ENCODE measurements at regions of chr22 and their contacts with region 1.

Region 1: GRCh38 chr22:37442537-37442936 is 15.3 kb upstream of the ELFN2 start:
- DNase-seq: peak; percentile 67
- ATAC-seq: peak; percentile 87
- H3K4me3 ChIP-seq: peak overlapping the region; percentile 46 to 48
- H3K27ac ChIP-seq: peak overlapping the region; percentile 17
- H3K4me1 ChIP-seq: peaks cover 31 to 51% of the 10 kb centered on the region in 2 experiments
- H3K27me3 ChIP-seq: no peaks in the 10 kb centered on the region
- CTCF ChIP-seq: no peak
- POLR2A ChIP-seq: peak; percentile 79
- RAD21 ChIP-seq: no peak

Region 2: GRCh38 chr22:36999463-36999862 is 443.1 kb before region 1 on chr22:
- CTCF ChIA-PET with region 1: no interaction called
- POLR2A ChIA-PET with region 1: no interaction called
- RAD21 ChIA-PET with region 1: no interaction called
- intact Hi-C with region 1: no loop called
- DNase-seq: peak; percentile 37
- ATAC-seq: no peak
- H3K4me3 ChIP-seq: peak overlapping the region in 1 of 2 experiments; percentile 20; a peak in 1 of 4 replicates
- H3K27ac ChIP-seq: peak overlapping the region; percentile 56
- H3K4me1 ChIP-seq: peaks cover 17 to 29% of the 10 kb centered on the region in 2 experiments
- H3K27me3 ChIP-seq: no peaks in the 10 kb centered on the region
- CTCF ChIP-seq: no peak
- POLR2A ChIP-seq: no peak
- RAD21 ChIP-seq: no peak

Region 3: DNA sequence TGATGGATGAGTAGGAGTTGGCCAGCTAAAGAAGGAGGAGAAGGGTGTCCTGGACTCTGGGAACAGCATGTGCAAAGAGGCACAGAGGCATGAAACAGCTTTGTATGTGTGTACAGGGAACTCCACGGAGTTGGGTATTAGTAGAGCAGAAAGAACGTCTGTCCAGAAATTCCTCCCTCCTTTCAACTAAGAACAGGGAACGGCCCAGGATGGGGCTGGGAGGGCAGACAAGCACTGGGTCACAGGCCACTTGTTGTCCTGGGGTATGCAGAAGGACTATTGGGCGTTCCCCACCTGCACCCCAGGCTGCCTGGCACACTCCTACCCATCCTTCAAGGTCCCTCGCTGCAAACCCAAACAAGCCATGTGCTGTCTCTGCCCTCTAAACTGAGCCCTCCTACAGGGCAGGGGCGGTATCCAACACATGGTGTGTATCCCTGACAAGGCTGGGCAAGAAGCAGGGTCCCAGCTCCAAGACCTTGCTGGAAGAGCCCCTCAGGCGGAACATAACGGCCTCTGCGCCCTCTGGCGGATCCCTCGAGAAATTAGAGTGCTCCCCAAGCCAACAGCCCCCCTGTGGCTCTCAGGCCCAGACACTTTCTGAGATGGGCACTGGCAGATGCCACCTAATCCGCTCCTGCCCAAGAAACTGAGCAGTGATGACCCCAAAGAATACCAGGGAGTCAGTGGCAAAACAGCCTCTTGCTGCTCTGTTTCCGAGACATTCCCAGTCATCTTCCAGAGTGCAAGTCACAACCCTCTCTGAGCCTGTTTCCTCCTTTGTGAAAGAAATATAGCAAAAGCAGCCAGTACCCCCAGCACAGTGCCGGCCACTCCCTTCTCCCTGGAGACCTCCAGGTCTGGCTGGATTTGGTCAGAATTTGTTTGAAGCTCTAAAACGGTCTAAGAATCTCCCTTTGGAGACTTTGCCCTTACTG is 13.6 kb before region 1 on chr22:
- CTCF ChIA-PET with region 1: interaction called, 10 read pairs
- POLR2A ChIA-PET with region 1: interaction called, 7 read pairs
- RAD21 ChIA-PET with region 1: interaction called, 3 to 5 read pairs
- intact Hi-C with region 1: no loop called
- DNase-seq: peak; percentile 37
- ATAC-seq: peak; percentile 31
- H3K4me3 ChIP-seq: peak overlapping the region; percentile 70 to 87; a peak in 3 of 4 replicates
- H3K27ac ChIP-seq: peak overlapping the region; percentile 95
- H3K4me1 ChIP-seq: peaks cover 54 to 91% of the 10 kb centered on the region in 2 experiments
- H3K27me3 ChIP-seq: no peaks in the 10 kb centered on the region
- CTCF ChIP-seq: peak in 2 of 3 experiments; percentile 82 to 88; a peak in 4 of 6 replicates
- POLR2A ChIP-seq: no peak
- RAD21 ChIP-seq: no peak

Region 4: DNA sequence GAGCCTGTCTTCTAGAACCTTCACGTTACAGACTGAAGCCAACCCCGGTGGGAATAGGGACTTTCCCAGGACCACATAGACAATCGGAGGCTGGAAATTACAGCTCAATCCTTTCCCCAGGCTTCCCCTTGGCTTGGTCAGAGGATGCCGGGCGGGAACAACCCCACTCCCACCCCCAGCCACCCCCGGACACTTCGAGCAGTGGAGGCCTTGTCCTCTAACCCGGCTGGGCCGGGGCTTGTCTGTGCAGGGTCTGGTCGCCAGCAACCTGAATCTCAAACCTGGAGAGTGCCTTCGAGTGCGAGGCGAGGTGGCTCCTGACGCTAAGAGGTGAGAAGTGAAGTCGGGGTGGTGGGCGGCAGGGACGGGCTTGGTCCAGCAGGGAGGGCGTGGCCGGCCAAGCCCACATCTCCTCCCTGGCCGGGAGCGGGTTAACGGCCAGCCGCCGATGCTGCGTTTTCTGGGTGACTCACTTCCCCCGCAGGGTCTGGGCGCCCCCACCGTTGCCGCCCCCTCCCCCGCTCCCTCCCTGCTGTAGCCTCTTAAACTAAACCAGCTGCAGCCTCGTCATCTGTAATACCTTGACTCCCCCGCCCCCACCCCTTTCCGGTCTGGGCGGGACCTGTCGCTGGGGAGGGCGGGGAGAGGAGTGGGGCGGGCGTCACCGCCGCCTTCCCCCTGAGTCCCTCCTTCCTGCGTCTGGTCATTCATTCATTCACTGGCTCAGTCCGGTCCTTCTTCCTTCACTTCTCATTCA is 234.4 kb after region 1 on chr22:
- CTCF ChIA-PET with region 1: no interaction called
- POLR2A ChIA-PET with region 1: no interaction called
- RAD21 ChIA-PET with region 1: no interaction called
- intact Hi-C with region 1: no loop called
- DNase-seq: peak; percentile 69
- ATAC-seq: peak; percentile 49
- H3K4me3 ChIP-seq: peak overlapping the region; percentile 71 to 86
- H3K27ac ChIP-seq: peak overlapping the region; percentile 97
- H3K4me1 ChIP-seq: peaks cover 40 to 75% of the 10 kb centered on the region in 2 experiments
- H3K27me3 ChIP-seq: no peaks in the 10 kb centered on the region
- CTCF ChIP-seq: no peak
- POLR2A ChIP-seq: no peak
- RAD21 ChIP-seq: no peak

Measured in HCT116 (cell line).